OCI-LY7 (cell line): ENCODE measurements at regions of chr5 and their contacts with region 1.

Region 1: DNA sequence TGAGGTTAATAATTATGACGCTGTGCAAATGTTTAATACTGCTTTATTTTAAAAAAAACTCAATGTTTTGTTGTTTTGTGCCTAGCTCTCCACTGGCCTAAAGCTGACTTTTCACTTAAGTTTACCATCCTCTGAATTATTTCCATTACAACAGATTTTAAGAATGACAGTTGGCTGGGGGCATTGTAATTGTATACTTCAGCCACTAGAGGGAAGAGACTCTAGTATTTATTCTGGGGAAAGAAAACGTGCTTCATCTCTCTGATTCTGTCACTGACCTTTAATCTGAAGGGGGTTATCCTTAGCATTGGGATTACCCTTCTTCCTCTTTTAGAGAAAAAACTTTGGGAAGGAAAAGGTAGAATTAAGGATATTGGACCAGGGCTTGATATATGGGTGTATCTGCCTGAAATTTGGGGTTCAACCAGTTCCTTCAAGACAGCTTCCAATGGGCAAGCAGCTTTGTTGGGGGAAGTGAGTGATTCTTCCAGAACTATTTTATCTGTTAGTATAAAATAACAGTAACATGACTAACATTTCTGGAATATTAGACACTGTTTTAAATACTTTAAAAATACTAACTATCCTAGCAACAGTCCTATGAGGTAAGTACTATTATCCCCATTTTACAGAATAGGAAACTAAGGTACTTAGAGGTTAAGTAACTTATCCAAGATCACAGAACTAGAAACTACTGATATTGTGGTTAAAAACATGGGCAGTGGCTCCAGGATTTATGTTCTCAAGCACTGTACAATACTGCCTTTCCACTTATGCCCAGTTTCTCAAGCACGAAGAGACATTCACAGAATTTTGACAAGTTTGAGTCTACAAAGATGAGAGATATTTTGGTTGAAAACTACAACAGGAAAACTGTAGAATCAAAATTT is 208.4 kb downstream of the CD180 start:
- DNase-seq: peak; percentile 55
- H3K4me3 ChIP-seq: no peak overlapping the region
- H3K27ac ChIP-seq: no peak overlapping the region
- H3K4me1 ChIP-seq: no peaks in the 10 kb centered on the region
- CTCF ChIP-seq: peak; percentile 89

Region 2: DNA sequence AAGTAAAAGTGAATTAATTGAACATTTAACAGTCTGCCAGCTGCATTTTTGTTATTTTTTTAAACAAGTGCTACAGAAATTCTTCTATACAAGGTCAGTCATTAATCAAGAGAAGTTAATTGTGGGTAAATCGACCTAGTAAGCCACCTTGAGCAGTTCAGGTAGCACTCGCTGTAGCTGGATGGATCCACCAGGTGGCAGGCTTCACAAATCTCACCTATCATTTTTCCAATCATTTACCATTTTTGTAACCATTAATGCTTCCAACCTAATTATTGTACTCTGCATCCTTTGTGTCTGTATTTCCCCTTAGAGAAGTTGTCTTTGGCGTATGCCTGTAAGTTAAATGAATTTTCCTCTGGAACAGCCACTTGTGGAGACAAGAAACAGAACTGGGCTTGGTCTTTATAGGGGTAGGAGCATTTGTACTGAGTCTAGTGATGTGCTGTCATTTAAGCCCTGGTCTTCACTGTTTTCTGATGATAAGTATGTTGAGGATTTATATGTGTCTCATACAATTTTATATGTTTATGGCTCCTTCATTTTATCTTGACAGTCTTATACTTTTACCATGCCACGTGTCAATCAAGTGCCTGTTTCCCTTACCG is 168.9 kb after region 1 on chr5:
- CTCF ChIA-PET with region 1: no interaction called
- POLR2A ChIA-PET with region 1: no interaction called
- intact Hi-C with region 1: loop called (anchors 5 kb)
- DNase-seq: peak; percentile 68
- H3K4me3 ChIP-seq: no peak overlapping the region
- H3K27ac ChIP-seq: no peak overlapping the region
- H3K4me1 ChIP-seq: no peaks in the 10 kb centered on the region
- CTCF ChIP-seq: peak; percentile 99